ENCODE measurements at regions of chr20 and their contacts with region 1.

Region 1: DNA sequence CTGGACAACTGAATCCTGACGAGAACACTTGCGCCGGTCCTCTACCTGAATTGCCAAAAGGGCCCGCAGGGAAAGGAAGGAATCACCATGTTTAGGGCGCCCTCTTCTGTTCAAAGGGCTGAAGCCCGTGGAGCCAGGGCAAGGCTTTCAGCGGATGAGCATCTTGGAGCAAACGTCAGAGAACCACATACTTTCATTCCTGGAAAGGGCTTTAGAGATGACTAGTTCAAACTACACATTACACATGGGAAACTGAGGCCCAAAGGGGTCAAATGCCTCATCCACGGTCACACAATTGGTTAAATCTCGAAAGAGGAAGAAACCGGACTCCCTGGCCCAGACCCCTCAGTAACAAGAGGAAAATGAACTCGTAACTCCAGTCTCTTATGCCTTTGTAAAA is 11.5 kb upstream of the ZNF133 start:
- DNase-seq: peak; percentile 44 to 62
- ATAC-seq: peak; percentile 64 to 87 (median 76)
- H3K4me3 ChIP-seq: no peak overlapping the region
- H3K27ac ChIP-seq: no peak overlapping the region
- H3K4me1 ChIP-seq: no peaks in the 10 kb centered on the region
- H3K27me3 ChIP-seq: peaks cover 0 to 3% (median 3%) of the 10 kb centered on the region in 3 donors
- CTCF ChIP-seq: peak; percentile 72

Region 2: GRCh38 chr20:17504898-17505635 is 771.8 kb before region 1 on chr20:
- intact Hi-C with region 1: loop called (anchors 5 to 10 kb)
- DNase-seq: peak; percentile 49 to 68
- ATAC-seq: peak; percentile 68 to 89 (median 74)
- H3K4me3 ChIP-seq: peak overlapping the region; percentile 63
- H3K27ac ChIP-seq: no peak overlapping the region
- H3K4me1 ChIP-seq: no peaks in the 10 kb centered on the region
- H3K27me3 ChIP-seq: no peaks in the 10 kb centered on the region
- CTCF ChIP-seq: peak; percentile 74

Region 3: GRCh38 chr20:18137412-18138265 is 139.2 kb before region 1 on chr20 and contains the starts of genes KAT14 and PET117:
- intact Hi-C with region 1: loop called in 1 of 2 experiments (anchors 5 kb)
- DNase-seq: peak; percentile 96
- ATAC-seq: peak; percentile 99
- H3K4me3 ChIP-seq: peak within 1 kb of the TSS; percentile 75
- H3K27ac ChIP-seq: peak within 1 kb of the TSS; percentile 96
- H3K4me1 ChIP-seq: peaks cover 13% of the 10 kb centered on the region
- H3K27me3 ChIP-seq: no peaks in the 10 kb centered on the region
- CTCF ChIP-seq: no peak
- total RNA-seq, gene KAT14: 18.4 to 23.9 (median 19.9) TPM
- total RNA-seq, gene PET117: 13.2 to 23.6 (median 15.8) TPM

Region 4: DNA sequence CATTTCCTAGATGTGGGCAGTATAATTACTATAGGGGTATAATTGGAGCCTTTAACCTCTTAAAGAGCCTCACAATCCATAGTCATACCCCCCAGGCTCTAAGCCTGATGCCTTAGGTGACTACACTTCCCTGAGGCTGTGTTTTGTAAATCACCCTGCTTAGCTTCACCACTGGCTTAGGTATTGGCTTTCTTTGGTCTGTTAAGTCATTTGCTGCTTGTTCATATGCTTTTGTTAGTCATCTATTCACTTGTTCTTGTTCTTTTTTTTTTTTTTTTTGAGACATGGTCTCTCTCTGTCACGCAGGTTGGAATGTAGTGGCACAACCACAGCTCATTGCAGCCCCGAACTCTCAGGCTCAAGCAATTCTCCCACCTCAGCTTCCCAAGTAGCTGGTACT is 112.5 kb before region 1 on chr20:
- intact Hi-C with region 1: loop called in 1 of 2 experiments (anchors 10 kb)
- DNase-seq: no peak
- ATAC-seq: no peak
- H3K4me3 ChIP-seq: no peak overlapping the region
- H3K27ac ChIP-seq: no peak overlapping the region
- H3K4me1 ChIP-seq: no peaks in the 10 kb centered on the region
- H3K27me3 ChIP-seq: no peaks in the 10 kb centered on the region
- CTCF ChIP-seq: no peak